ENCODE measurements at regions of chr5 and their contacts with region 1.

Region 1: DNA sequence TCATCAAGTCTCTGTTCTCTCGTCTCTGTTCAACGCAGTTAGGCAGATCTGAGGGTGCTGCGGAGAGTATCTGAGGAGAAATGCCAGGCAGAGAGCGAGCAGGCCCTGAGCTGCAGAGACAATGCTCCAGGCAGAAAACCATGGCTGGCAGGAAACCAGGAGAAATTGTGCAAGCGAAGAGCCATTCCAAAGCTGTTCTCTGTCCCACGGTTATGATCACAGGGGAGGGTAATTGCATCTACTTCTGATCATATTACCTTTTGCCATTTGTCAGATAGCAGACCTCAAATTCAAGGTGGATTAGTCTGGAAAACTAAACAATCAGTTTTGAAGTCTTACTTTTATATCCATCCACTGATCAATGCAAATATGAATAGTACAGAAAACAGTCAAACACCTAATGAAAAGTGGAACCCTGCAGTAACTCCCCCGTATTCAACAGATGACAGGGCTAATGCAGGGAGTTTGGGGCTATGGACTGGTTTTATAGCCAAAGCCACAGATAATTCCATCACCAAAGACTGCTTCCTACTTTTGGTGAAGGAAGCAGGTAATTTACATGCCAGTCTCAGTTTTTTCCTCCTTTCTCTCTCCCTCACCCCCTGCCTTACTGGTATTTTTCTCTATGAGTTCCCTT is 228.0 kb downstream of the DCP2 start:
- DNase-seq: peak; percentile 96
- H3K4me3 Mint-ChIP-seq: peak overlapping the region; percentile 59
- H3K27ac Mint-ChIP-seq: no peak overlapping the region
- H3K4me1 Mint-ChIP-seq: peaks cover 45% of the 10 kb centered on the region
- H3K27me3 Mint-ChIP-seq: no peaks in the 10 kb centered on the region
- CTCF ChIP-seq: no peak

Region 2: DNA sequence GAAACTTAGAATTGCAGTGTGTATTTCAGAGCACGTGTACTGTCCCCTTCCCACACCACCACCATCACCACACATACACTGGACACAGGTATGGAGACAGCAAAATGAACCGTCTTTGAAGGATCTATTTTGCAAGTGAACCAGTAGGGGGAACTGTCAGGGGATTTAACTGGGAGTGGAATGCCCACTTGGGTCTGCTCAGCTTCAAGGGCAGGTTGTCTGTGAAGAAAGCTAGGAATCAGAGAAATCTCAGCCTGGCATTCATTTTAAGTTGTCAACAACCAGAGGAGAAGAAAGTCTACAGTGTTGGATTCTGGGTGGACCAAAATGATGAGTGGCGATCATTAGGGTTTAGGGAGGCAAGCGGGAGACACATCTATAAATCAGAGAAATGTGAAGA is 81.0 kb before region 1 on chr5:
- CTCF ChIA-PET with region 1: interaction called, 4 read pairs
- POLR2A ChIA-PET with region 1: interaction called, 14 read pairs
- intact Hi-C with region 1: no loop called
- DNase-seq: peak; percentile 31
- H3K4me3 Mint-ChIP-seq: no peak overlapping the region
- H3K27ac Mint-ChIP-seq: no peak overlapping the region
- H3K4me1 Mint-ChIP-seq: no peaks in the 10 kb centered on the region
- H3K27me3 Mint-ChIP-seq: no peaks in the 10 kb centered on the region
- CTCF ChIP-seq: no peak

Region 3: GRCh38 chr5:113166852-113167366 is 37.7 kb before region 1 on chr5:
- CTCF ChIA-PET with region 1: interaction called, 3 read pairs
- POLR2A ChIA-PET with region 1: interaction called, 12 read pairs
- intact Hi-C with region 1: loop called (anchors 2 kb)
- DNase-seq: peak; percentile 94
- H3K4me3 Mint-ChIP-seq: peak overlapping the region; percentile 60
- H3K27ac Mint-ChIP-seq: peak overlapping the region; percentile 87
- H3K4me1 Mint-ChIP-seq: peaks cover 66% of the 10 kb centered on the region
- H3K27me3 Mint-ChIP-seq: no peaks in the 10 kb centered on the region
- CTCF ChIP-seq: no peak

Region 4: DNA sequence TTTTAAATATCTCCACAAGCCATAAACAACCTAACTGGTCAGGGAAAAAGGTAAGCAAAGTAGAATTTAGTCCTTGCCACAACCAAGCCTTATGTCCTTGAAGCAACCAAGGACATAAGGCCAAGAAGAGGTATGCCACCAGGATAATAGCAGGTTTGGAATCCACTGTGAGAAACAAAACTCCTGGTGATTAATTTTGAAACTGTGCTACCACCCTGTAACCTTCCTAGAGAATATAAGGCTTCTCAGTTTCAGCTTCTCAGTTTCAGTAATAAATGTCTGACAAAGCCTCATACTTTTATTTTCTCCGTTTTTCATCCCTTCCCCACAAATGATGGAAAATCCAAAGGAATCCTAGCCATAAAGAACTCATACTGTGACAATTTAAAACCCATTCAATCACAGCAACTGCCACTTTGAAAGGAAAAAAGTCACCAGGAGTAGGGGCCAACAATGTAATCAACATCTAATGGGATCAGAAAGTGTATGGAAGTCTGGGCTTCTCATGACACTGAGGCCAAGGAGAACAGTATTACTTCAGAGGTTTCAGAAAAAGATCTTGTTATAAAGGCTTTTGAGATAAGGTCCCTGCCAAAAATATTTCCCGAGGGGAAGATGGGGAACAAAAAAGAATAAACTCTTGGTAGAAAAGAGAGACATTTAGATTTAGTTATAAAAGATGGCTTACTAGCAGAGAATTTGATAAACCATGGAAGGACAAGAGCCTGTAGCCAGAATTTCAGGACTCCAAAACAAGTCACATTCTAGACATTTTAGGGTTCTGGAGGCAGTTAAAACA is 41.0 kb after region 1 on chr5:
- CTCF ChIA-PET with region 1: interaction called, 5 read pairs
- POLR2A ChIA-PET with region 1: interaction called, 18 read pairs
- intact Hi-C with region 1: no loop called
- DNase-seq: no peak
- H3K4me3 Mint-ChIP-seq: no peak overlapping the region
- H3K27ac Mint-ChIP-seq: no peak overlapping the region
- H3K4me1 Mint-ChIP-seq: peaks cover 17% of the 10 kb centered on the region
- H3K27me3 Mint-ChIP-seq: no peaks in the 10 kb centered on the region
- CTCF ChIP-seq: no peak

Region 5: GRCh38 chr5:113294311-113295110 is 89.9 kb after region 1 on chr5:
- CTCF ChIA-PET with region 1: interaction called, 5 read pairs
- POLR2A ChIA-PET with region 1: interaction called, 25 read pairs
- intact Hi-C with region 1: loop called (anchors 1 kb)
- DNase-seq: peak; percentile 83
- H3K4me3 Mint-ChIP-seq: peak overlapping the region; percentile 82
- H3K27ac Mint-ChIP-seq: peak overlapping the region; percentile 54
- H3K4me1 Mint-ChIP-seq: peaks cover 13% of the 10 kb centered on the region
- H3K27me3 Mint-ChIP-seq: no peaks in the 10 kb centered on the region
- CTCF ChIP-seq: no peak